ENCODE measurements at regions of chr17 and their contacts with region 1.

Region 1: DNA sequence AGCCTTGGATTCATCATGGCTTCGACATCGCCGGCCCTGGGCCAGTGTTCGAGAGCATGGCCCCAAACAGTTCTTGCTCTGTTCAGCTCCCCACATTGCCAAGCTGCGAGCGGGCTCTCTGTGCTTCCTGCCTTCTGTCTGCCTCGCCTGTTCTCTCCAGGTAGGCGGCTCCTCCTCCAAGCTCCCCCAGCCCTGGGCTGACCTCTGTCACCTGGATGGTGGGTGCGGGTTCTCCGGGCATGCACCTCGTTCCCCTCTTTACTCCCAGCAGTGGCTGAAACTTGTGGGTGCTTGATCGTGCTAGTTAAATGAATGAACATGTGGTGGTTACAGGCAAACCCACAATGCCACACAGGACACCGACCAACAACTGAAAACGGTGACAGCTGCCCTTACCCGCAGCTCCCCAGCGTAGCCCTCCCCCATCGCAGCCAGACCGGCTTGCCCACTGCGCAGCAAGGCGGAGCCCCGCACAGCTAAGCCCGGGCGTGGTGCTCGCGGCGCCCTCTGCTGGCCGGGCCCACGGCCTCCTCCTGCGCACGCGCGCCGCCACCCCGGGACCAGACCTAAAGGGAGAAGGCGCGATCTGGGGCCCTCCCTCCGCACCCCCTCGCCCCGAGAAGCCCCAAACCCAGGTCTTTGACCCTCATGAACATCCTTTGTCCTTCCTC is 23.0 kb upstream of the EIF1 start:
- DNase-seq: peak; percentile 99
- H3K4me3 Mint-ChIP-seq: peak overlapping the region; percentile 77
- H3K27ac Mint-ChIP-seq: peak overlapping the region; percentile 95
- H3K4me1 Mint-ChIP-seq: peaks cover 65% of the 10 kb centered on the region
- H3K27me3 Mint-ChIP-seq: no peaks in the 10 kb centered on the region
- CTCF ChIP-seq: peak; percentile 94

Region 2: GRCh38 chr17:40803617-40804082 is 862.1 kb before region 1 on chr17:
- CTCF ChIA-PET with region 1: interaction called, 8 read pairs
- intact Hi-C with region 1: loop called (anchors 1 kb)
- DNase-seq: peak; percentile 100
- H3K4me3 Mint-ChIP-seq: no peak overlapping the region
- H3K27ac Mint-ChIP-seq: no peak overlapping the region
- H3K4me1 Mint-ChIP-seq: no peaks in the 10 kb centered on the region
- H3K27me3 Mint-ChIP-seq: peaks cover 38% of the 10 kb centered on the region
- CTCF ChIP-seq: peak; percentile 100

Region 3: DNA sequence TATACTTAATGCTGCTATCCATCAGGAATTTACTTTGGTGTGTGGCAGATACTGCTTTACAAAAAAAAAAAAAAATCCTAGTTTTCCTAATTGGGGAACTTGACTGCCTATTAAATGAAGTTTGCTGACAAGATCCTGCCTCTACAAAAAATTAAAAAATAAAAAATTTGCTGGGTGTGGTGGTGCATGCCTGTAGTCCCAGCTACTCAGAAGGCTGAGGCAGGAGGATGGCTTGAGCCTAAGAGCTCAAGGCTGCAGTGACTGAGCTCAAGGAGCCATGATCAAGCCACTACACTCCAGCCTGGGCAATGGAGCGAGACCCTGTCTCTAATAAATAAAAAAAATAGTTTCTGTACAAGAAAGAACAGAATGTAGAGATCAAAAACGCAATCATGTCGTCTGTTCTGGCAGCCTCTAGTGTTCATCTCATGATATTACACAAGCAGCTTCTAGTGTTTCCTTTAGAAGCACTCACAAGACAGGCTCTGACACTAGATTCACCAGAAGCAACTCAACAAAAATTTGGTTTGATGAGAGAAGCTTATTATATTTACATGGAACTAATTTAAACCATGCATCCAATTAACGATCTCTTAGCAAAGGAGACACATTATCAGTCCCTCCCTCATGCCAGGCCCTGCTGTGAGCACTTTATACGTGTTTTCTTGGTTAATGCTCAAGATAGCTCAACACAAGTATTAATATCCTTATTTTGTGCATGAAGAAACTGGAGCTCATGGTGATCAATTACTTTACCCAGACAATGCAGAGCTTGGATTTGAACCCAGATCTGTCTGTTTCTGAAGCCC is 343.4 kb before region 1 on chr17:
- CTCF ChIA-PET with region 1: interaction called, 5 read pairs
- intact Hi-C with region 1: loop called (anchors 10 kb)
- DNase-seq: no peak
- H3K4me3 Mint-ChIP-seq: no peak overlapping the region
- H3K27ac Mint-ChIP-seq: no peak overlapping the region
- H3K4me1 Mint-ChIP-seq: peaks cover 23% of the 10 kb centered on the region
- H3K27me3 Mint-ChIP-seq: no peaks in the 10 kb centered on the region
- CTCF ChIP-seq: peak; percentile 80

Region 4: DNA sequence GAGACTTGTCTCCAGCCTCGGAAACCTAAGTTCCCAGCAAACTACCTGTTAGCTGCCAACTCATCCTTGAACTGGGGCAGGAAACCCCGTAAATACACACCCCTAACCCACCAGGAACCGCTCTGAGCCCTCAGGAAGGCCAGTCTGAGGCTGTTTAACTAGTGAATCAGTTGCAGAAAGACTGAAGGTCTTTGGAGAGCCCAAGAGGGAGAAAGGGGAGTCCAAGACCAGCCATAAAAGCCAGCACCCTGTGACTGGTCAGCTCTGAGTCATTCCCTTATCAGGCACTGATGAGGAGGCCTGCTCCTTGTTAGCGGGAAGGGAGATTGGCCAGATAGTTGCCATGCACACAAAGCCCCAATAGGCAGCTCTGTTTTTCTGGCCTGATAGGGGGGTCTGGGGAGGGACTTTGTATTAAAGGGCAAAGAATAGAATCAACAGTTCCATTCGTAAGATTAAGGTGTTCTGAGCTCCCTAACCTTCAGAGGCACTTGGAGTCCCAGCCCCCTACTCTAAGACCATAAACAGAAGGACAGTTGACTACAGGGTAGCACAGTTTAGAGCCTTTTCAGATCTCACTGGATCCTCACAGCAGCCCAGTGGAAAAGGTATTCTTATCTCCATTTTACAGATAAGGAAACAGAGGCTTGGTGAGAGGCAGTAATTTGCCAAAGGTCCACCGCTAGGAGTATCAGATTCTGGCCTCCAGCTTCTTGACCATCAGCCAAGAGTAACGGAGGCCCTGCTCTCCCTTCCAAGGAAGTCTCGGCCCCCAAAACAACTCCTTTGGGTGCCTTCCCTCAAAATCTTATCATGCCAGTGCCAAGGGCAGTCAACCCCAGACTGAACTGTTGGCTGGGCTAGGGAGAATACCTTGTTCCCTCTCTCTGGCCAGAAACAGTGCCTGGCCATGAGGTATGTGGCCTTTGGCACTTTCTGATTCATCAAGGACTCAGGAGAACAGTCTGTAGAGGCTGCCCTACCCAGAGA is 135.3 kb before region 1 on chr17:
- CTCF ChIA-PET with region 1: interaction called, 26 read pairs
- intact Hi-C with region 1: no loop called
- DNase-seq: peak; percentile 93
- H3K4me3 Mint-ChIP-seq: peak overlapping the region; percentile 95
- H3K27ac Mint-ChIP-seq: peak overlapping the region; percentile 99
- H3K4me1 Mint-ChIP-seq: peaks cover 62% of the 10 kb centered on the region
- H3K27me3 Mint-ChIP-seq: no peaks in the 10 kb centered on the region
- CTCF ChIP-seq: no peak

Region 5: GRCh38 chr17:41648411-41649195 is 17.1 kb before region 1 on chr17:
- CTCF ChIA-PET with region 1: interaction called, 245 read pairs
- intact Hi-C with region 1: loop called (anchors 1 kb)
- DNase-seq: peak; percentile 98
- H3K4me3 Mint-ChIP-seq: peak overlapping the region; percentile 64
- H3K27ac Mint-ChIP-seq: peak overlapping the region; percentile 62
- H3K4me1 Mint-ChIP-seq: peaks cover 33% of the 10 kb centered on the region
- H3K27me3 Mint-ChIP-seq: no peaks in the 10 kb centered on the region
- CTCF ChIP-seq: peak; percentile 93

Region 6: GRCh38 chr17:41695954-41696756 is 30.5 kb after region 1 on chr17:
- CTCF ChIA-PET with region 1: interaction called, 13 read pairs
- intact Hi-C with region 1: no loop called
- DNase-seq: peak; percentile 84
- H3K4me3 Mint-ChIP-seq: no peak overlapping the region
- H3K27ac Mint-ChIP-seq: peak overlapping the region; percentile 59
- H3K4me1 Mint-ChIP-seq: peaks cover 34% of the 10 kb centered on the region
- H3K27me3 Mint-ChIP-seq: no peaks in the 10 kb centered on the region
- CTCF ChIP-seq: peak; percentile 86